ENCODE measurements at regions of chr15 and their contacts with region 1.

Region 1: GRCh38 chr15:82985688-82986441 is at the start of gene RAMAC:
- DNase-seq: peak; percentile 85 to 98 (median 93)
- ATAC-seq: peak; percentile 93
- H3K4me3 ChIP-seq: peak within 1 kb of the TSS; percentile 76 to 92
- H3K4me3 Mint-ChIP-seq: peak within 1 kb of the TSS; percentile 97
- H3K27ac ChIP-seq: peak within 1 kb of the TSS; percentile 67 to 81
- H3K27ac Mint-ChIP-seq: peak within 1 kb of the TSS; percentile 96
- H3K4me1 ChIP-seq: peaks cover 18% of the 10 kb centered on the region
- H3K4me1 Mint-ChIP-seq: peaks cover 31% of the 10 kb centered on the region
- H3K27me3 ChIP-seq: no peaks in the 10 kb centered on the region
- H3K27me3 Mint-ChIP-seq: no peaks in the 10 kb centered on the region
- CTCF ChIP-seq: no peak
- total RNA-seq, gene RAMAC: 27.7 to 32.4 TPM

Region 2: DNA sequence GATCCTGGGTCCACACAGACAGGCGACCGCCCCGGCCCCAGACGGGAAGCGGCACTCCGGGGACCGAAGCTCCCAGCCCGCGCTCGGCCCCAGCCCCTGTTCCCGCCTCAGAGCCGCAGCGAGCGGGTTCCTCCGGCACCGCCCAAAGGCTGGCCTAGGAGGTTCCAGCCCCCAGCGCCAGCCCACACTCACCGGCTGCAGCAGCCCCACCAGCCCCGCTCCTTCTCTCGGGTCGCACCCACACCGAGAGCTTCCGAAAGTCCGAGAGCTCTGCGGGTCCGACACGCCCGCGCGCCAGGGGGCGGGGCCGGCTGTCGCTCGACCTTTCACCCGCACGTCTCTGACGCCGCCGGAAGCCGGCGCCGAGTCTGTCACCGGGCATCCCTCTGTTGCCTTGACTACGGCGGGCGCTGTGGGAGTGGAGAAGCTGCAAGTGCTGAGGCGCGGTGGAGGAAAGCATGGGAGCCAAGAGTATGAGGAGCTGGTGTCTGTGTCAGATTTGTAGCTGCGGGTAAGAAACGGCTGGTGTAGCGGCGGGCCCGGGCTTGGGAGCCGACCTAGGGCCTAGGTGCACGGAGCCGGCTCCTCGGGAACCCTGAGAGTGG is 723.3 kb before region 1 on chr15 and contains the starts of genes EFL1 and SAXO2:
- CTCF ChIA-PET with region 1: no interaction called
- POLR2A ChIA-PET with region 1: no interaction called
- intact Hi-C with region 1: loop called in 1 of 2 experiments (anchors 10 kb)
- DNase-seq: peak; percentile 76 to 93 (median 88)
- ATAC-seq: peak; percentile 94
- H3K4me3 ChIP-seq: peak within 1 kb of the TSS; percentile 59 to 72
- H3K4me3 Mint-ChIP-seq: peak within 1 kb of the TSS; percentile 93
- H3K27ac ChIP-seq: peak within 1 kb of the TSS; percentile 40 to 58
- H3K27ac Mint-ChIP-seq: peak within 1 kb of the TSS; percentile 88
- H3K4me1 ChIP-seq: peaks cover 24% of the 10 kb centered on the region
- H3K4me1 Mint-ChIP-seq: peaks cover 35% of the 10 kb centered on the region
- H3K27me3 ChIP-seq: no peaks in the 10 kb centered on the region
- H3K27me3 Mint-ChIP-seq: no peaks in the 10 kb centered on the region
- CTCF ChIP-seq: no peak
- total RNA-seq, gene EFL1: 5.0 to 9.5 TPM
- total RNA-seq, gene SAXO2: 2.6 to 2.9 TPM

Region 3: DNA sequence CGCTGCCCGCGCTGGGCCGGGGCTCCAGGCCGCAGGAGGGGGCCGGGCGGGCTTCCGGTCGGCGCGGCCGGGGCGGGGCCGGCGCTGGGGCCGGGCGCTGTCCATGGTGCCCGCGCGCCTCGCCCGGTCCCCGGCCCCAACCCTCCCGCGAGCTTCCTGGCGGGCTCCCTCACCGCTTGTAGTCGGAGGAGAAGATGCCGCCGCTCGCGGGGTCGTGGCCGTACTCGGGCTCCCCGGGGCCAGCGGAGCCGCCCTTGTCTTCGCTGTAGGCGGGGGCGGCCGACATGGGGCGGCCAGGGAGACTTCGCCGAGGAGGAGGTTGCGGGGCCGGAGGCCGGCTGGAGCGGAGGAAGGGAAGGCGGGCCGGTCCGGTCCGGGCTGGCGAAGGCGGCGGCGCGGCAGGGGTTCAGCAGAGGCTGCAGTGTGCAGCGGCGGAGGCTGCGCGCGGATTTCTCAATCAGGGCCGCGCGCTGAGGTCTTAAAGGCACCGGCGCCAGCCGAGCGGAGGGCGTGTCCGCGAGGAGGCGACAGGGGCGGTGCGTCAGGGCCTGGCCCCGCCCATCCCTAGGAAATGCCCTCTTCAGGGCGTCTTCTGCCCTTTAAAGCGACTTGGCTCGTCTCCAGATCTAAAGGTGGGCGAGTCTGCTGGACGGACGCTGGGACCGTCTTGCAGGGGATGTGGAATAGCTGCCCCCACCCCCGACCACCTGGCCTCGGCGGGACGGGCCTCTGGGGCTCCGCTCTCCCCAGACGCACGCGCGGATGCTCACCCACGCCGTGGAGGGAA is 276.3 kb before region 1 on chr15 and contains the start of gene AP3B2:
- CTCF ChIA-PET with region 1: no interaction called
- POLR2A ChIA-PET with region 1: no interaction called
- intact Hi-C with region 1: loop called (anchors 1 kb)
- DNase-seq: peak; percentile 40 to 82 (median 67)
- ATAC-seq: peak; percentile 95
- H3K4me3 ChIP-seq: peak within 1 kb of the TSS; percentile 44 to 81
- H3K4me3 Mint-ChIP-seq: peak within 1 kb of the TSS; percentile 76
- H3K27ac ChIP-seq: no peak within 1 kb of the TSS
- H3K27ac Mint-ChIP-seq: no peak within 1 kb of the TSS
- H3K4me1 ChIP-seq: peaks cover 13% of the 10 kb centered on the region
- H3K4me1 Mint-ChIP-seq: peaks cover 1% of the 10 kb centered on the region
- H3K27me3 ChIP-seq: peaks cover 0 to 6% of the 10 kb centered on the region in 2 experiments
- H3K27me3 Mint-ChIP-seq: peaks cover 25% of the 10 kb centered on the region
- CTCF ChIP-seq: no peak
- total RNA-seq, gene AP3B2: 0.81 to 0.90 TPM

Region 4: GRCh38 chr15:82809404-82810060 is 176.3 kb before region 1 on chr15 and contains the start of gene WHAMM:
- CTCF ChIA-PET with region 1: interaction called, 5 read pairs
- POLR2A ChIA-PET with region 1: interaction called, 8 read pairs
- intact Hi-C with region 1: loop called (anchors 2 to 5 kb)
- DNase-seq: peak; percentile 89 to 98 (median 94)
- ATAC-seq: peak; percentile 93
- H3K4me3 ChIP-seq: peak within 1 kb of the TSS; percentile 67 to 69
- H3K4me3 Mint-ChIP-seq: peak within 1 kb of the TSS; percentile 92
- H3K27ac ChIP-seq: peak within 1 kb of the TSS; percentile 93 to 97
- H3K27ac Mint-ChIP-seq: peak within 1 kb of the TSS; percentile 97
- H3K4me1 ChIP-seq: peaks cover 26% of the 10 kb centered on the region
- H3K4me1 Mint-ChIP-seq: peaks cover 32% of the 10 kb centered on the region
- H3K27me3 ChIP-seq: no peaks in the 10 kb centered on the region
- H3K27me3 Mint-ChIP-seq: no peaks in the 10 kb centered on the region
- CTCF ChIP-seq: no peak
- total RNA-seq, gene WHAMM: 123 to 124 TPM

Region 5: GRCh38 chr15:83011271-83012075 is 25.6 kb after region 1 on chr15 and contains the start of gene C15orf40:
- CTCF ChIA-PET with region 1: interaction called, 10 read pairs
- POLR2A ChIA-PET with region 1: interaction called, 20 read pairs
- intact Hi-C with region 1: loop called (anchors 1 kb)
- DNase-seq: peak; percentile 62 to 94 (median 86)
- ATAC-seq: peak; percentile 80
- H3K4me3 ChIP-seq: peak within 1 kb of the TSS; percentile 86 to 95
- H3K4me3 Mint-ChIP-seq: peak within 1 kb of the TSS; percentile 100
- H3K27ac ChIP-seq: peak within 1 kb of the TSS; percentile 75 to 79
- H3K27ac Mint-ChIP-seq: peak within 1 kb of the TSS; percentile 99
- H3K4me1 ChIP-seq: peaks cover 26% of the 10 kb centered on the region
- H3K4me1 Mint-ChIP-seq: peaks cover 58% of the 10 kb centered on the region
- H3K27me3 ChIP-seq: no peaks in the 10 kb centered on the region
- H3K27me3 Mint-ChIP-seq: no peaks in the 10 kb centered on the region
- CTCF ChIP-seq: no peak
- total RNA-seq, gene C15orf40: 11.8 to 12.3 TPM

Measured in CD8-positive, alpha-beta T cell (primary cell).